Dorsolateral prefrontal cortex (tissue), 120 donors: ENCODE measurements at regions of chr11 and their contacts with region 1.

Region 1: GRCh38 chr11:3797329-3798095 is at the start of gene NUP98:
- DNase-seq: peak; percentile 97 to 100 (median 100)
- H3K4me3 ChIP-seq: peak within 1 kb of the TSS; percentile 79 to 100 (median 98)
- H3K27ac ChIP-seq: peak within 1 kb of the TSS; percentile 48 to 98 (median 88)
- H3K27me3 ChIP-seq: no peaks in the 10 kb centered on the region
- CTCF ChIP-seq: peak in 24 of 56 donors; percentile 4 to 53 (median 16)
- total RNA-seq, gene NUP98: 40.2 to 80.3 (median 56.5) TPM

Region 2: DNA sequence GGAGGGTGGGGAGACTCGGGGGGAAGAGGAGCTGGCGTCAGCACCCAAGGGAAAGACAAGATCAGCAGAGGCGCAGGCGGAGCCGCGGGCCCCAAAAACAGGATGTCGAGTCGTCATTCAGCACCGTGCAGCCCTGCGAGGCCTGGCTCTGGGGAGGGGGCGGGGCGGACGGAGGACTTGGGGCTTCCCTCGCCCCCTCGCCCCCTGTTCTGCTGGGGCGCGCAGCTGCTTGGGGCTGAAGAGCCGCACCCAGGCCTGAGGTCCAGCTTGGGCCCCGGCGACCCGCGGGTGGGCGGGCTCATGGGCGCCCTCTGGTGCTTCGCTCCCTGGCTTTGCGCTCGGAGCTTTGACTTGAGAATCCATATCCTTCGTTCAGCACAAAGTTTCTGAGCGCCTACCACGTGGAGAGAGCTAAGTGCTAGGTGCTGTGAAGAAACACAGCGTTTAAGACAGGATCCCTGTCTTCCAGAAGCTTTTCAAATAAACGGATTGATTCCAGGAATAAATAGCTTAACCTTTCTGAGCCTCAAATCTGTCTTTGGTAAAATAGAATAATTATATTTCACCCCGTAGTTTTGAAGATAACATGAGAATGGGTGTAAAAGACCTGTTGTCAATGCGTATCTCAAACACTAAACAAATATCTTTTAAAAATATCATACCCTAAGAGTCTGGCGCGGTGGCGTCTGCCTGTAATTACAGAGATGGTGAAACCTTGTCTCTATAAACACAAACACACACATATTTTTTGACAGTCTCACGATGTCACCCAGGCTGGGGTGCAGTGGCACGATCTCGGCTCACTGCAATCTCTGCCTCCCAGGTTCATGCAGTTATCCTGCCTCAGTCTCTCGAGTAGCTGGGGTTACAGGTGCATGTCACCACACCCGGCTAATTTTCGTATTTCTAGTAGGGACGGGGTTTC is 44.2 kb after region 1 on chr11:
- intact Hi-C with region 1: loop called (anchors 2 to 5 kb)
- DNase-seq: peak; percentile 83 to 91 (median 86)
- H3K4me3 ChIP-seq: peak overlapping the region; percentile 63 to 96 (median 86)
- H3K27ac ChIP-seq: peak overlapping the region; percentile 69 to 100 (median 97)
- H3K27me3 ChIP-seq: no peaks in the 10 kb centered on the region
- CTCF ChIP-seq: peak; percentile 64 to 96 (median 88)

Region 3: DNA sequence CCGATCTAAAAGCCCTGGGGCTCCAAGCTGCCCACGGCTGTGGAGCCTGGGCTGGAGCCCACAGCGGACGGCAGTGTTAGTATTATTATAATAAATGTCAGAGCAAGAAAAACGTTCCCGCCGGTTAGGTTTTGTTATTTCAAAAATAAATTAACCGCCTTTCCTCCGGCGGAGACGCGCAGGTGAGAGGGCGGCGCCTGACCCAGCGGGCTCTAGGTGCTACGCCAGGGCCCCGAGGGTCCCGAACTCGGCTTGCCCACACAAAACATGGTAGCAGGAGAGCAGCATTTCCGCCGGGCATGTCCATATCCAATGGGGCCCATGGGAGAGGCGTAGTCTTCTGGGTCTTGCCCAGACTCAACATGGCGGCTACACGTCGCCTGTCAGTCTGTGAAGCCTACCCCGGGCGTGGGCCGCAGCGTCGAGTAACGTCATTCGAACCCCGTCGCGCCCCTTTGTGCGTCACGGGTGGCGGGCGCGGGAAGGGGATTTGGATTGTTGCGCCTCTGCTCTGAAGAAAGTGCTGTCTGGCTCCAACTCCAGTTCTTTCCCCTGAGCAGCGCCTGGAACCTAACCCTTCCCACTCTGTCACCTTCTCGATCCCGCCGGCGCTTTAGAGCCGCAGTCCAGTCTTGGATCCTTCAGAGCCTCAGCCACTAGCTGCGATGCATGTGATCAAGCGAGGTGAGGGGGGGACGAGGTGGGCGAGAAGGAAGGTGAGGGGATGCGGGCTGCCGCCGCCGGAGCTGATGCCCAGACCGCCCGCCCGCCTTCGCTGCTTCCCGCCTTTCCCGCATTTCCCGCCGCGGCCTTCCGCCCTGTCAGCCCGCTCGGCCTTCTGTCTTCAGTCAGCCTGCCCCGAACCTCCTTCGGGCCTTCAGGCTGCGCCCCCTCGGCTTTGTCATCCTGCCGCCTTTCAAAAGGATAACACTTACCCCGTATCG is 297.1 kb after region 1 on chr11 and contains the start of gene RRM1:
- intact Hi-C with region 1: loop called in 1 of 2 experiments (anchors 5 kb)
- DNase-seq: peak; percentile 91 to 98 (median 96)
- H3K4me3 ChIP-seq: peak within 1 kb of the TSS; percentile 56 to 99 (median 92)
- H3K27ac ChIP-seq: peak within 1 kb of the TSS; percentile 61 to 98 (median 93)
- H3K27me3 ChIP-seq: no peaks in the 10 kb centered on the region
- CTCF ChIP-seq: peak in 32 of 56 donors; percentile 6 to 57 (median 30)
- total RNA-seq, gene RRM1: 19.3 to 43.3 (median 30.8) TPM